Psoas muscle (tissue), 8 donors: ENCODE measurements at regions of chr12 and their contacts with region 1.

Region 1: DNA sequence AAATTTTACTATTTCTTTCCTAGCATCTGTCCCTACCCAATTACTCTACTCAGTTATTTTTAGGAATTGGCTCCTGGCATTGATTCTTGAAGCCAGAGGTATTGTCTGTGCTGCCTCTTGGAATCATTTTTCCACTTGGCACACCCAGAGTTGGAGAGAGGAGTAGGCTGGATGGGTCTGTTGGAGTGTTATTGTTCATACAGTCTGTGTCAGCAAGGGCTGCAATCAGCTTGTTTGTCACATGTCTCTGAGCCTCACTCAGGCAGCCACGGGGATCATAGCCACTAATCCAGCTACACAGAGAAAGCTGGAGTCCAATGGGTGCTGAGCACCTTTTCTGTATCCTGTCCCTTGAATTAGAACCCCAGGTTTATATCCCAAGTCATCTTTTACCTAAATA is 176.0 kb upstream of the DYRK2 start:
- DNase-seq: peak in 1 of 2 donors; percentile 49
- ATAC-seq: peak; percentile 80 to 95 (median 91)
- H3K4me3 ChIP-seq: no peak overlapping the region
- H3K27ac ChIP-seq: peak overlapping the region; percentile 69
- H3K4me1 ChIP-seq: peaks cover 19% of the 10 kb centered on the region
- H3K27me3 ChIP-seq: no peaks in the 10 kb centered on the region
- CTCF ChIP-seq: no peak

Region 2: DNA sequence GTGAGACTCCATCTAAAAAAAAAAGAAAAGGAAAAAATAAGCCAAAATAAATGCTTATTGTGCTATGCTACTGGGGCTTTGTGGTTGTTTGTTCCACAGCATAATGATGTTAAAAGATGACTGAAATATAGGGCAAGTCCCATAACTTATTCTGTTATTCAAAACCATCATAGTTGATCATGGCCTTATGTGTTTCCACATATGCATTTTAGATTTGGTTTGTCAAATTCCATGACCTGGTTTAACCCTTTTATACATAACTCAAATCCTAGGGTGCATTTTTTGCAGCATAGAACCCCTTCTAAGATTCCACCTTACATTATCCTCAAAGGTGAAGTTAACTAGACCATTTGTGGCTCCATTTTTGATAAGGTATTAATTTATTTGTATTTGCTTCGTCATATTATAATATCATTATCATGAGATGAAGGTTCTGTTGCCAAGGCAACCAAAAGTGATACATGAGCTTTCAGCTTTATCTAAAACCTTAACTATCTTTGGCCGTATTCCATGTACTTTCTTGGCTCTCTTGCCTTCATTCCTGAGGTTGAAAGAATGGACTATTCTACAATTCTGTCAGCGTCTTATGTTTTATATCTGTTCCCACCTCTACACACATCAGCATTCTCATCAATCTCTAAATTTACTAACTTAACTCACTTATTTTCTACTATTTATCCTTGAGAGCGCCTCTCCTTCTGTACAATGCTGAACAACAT is 37.3 kb after region 1 on chr12:
- intact Hi-C with region 1: loop called in 1 of 2 experiments (anchors 5 kb)
- DNase-seq: no peak
- ATAC-seq: no peak
- H3K4me3 ChIP-seq: no peak overlapping the region
- H3K27ac ChIP-seq: no peak overlapping the region
- H3K4me1 ChIP-seq: peaks cover 14% of the 10 kb centered on the region
- H3K27me3 ChIP-seq: no peaks in the 10 kb centered on the region
- CTCF ChIP-seq: no peak

Region 3: DNA sequence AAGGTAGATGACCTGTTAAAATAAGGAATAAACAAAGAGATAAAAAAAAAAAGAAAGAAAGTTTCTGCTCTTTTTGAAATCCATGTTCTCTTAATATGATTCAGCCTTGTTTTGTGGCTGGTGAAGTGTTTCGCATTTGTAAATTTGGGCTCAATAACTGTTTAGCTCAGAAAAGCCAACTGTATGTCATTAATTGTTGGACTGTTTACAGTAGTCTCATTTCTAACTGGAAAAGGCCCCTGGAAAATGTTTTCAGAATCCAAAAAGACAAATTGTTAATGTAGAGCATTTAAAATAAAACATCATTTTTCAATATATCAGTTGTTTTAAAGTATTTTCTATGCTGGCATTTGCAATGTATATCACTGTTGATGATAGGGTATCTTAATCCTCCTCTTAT is 128.6 kb after region 1 on chr12:
- intact Hi-C with region 1: no loop called
- DNase-seq: no peak
- ATAC-seq: no peak
- H3K4me3 ChIP-seq: no peak overlapping the region
- H3K27ac ChIP-seq: no peak overlapping the region
- H3K4me1 ChIP-seq: no peaks in the 10 kb centered on the region
- H3K27me3 ChIP-seq: no peaks in the 10 kb centered on the region
- CTCF ChIP-seq: no peak